ENCODE measurements at regions of chr9 and their contacts with region 1.

Region 1: GRCh38 chr9:137672907-137673791 is 54.3 kb downstream of the EHMT1 start:
- H3K4me3 ChIP-seq: no peak overlapping the region
- H3K27ac ChIP-seq: no peak overlapping the region
- H3K4me1 ChIP-seq: peaks cover 12% of the 10 kb centered on the region; the same call in 1 of the 2 replicates
- CTCF ChIP-seq: peak; percentile 61; the same call in 1 of the 2 replicates

Region 2: GRCh38 chr9:137578518-137579258 is 94.5 kb before region 1 on chr9 and contains the start of gene DPH7:
- CTCF ChIA-PET with region 1: interaction called, 12 read pairs
- POLR2A ChIA-PET with region 1: no interaction called
- H3K4me3 ChIP-seq: peak within 1 kb of the TSS; percentile 95
- H3K27ac ChIP-seq: peak within 1 kb of the TSS; percentile 84
- H3K4me1 ChIP-seq: no peaks in the 10 kb centered on the region; the same call in 1 of the 2 replicates
- CTCF ChIP-seq: peak; percentile 97

Region 3: DNA sequence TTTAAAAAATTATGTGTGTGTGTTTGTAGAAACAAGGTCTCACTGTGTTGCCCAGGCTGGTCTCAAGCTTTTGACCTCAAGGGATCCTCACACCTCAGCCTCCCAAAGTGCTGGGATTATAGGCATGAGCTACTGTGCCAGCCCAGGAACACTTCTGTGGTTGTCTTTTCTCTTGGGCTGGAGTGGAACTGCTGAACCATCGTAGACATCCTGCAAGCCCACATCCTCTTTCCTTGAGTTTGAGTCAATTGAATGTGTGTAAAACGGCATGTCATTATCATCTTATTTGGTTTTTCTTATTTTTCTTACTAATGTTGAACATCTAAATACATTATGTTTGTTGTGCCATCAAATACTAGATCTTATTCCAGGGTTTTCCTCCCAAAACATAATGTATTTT is 14.4 kb before region 1 on chr9:
- CTCF ChIA-PET with region 1: interaction called, 13 read pairs
- POLR2A ChIA-PET with region 1: interaction called, 3 read pairs
- H3K4me3 ChIP-seq: no peak overlapping the region
- H3K27ac ChIP-seq: no peak overlapping the region
- H3K4me1 ChIP-seq: no peaks in the 10 kb centered on the region
- CTCF ChIP-seq: no peak

Region 4: GRCh38 chr9:137689745-137690529 is 16.8 kb after region 1 on chr9:
- CTCF ChIA-PET with region 1: interaction called, 25 read pairs
- POLR2A ChIA-PET with region 1: no interaction called
- H3K4me3 ChIP-seq: no peak overlapping the region
- H3K27ac ChIP-seq: no peak overlapping the region
- H3K4me1 ChIP-seq: no peaks in the 10 kb centered on the region
- CTCF ChIP-seq: no peak

Region 5: DNA sequence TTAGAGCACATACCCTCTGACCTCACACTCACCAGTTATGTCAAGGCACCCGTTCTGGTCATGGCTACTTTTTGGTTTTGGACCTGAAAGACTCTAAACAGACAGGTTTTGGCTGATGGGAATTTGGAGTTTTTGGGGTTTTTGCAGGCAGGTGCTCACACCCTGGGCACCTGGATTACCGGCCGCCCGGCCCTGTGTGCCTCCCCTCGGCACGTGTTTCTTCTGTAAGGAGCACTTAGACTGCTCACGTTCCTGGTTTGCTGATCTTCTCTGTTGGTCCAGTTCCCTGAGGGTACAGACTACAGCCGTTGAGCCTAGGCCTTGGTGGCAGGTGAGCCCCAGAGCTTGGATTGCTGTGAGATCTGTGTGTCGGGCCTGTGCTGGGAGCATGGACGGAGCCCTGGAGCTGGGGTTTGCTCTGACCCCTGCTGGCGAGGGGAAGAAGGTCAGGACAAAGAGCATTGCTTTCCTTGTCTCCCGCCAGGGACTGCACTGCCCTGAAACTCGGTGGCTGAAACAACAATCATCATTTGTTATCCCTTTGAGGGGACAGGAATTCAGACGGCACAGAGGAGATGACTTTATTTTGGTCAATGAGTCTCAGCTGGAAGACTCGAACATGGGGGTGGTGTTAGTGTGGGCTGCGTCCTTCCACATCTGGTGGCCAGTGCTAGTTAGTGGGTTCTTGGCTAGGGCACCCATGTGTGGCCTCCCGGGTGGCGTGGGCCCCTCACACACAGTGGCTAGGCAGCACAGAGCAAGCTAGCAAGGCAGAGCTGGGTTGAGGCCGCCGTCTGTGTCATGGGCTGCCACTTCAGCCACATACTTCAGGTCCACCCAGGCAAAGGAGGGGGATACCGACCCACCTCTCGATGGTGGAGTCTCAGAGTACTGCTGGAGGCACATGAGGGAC is 22.1 kb after region 1 on chr9:
- CTCF ChIA-PET with region 1: interaction called, 23 read pairs
- POLR2A ChIA-PET with region 1: no interaction called
- H3K4me3 ChIP-seq: no peak overlapping the region
- H3K27ac ChIP-seq: no peak overlapping the region
- H3K4me1 ChIP-seq: no peaks in the 10 kb centered on the region
- CTCF ChIP-seq: peak; percentile 50; the same call in 1 of the 2 replicates

Region 6: GRCh38 chr9:137772281-137772873 is 99.2 kb after region 1 on chr9:
- CTCF ChIA-PET with region 1: interaction called, 26 read pairs
- POLR2A ChIA-PET with region 1: no interaction called
- H3K4me3 ChIP-seq: no peak overlapping the region
- H3K27ac ChIP-seq: no peak overlapping the region
- H3K4me1 ChIP-seq: no peaks in the 10 kb centered on the region
- CTCF ChIP-seq: no peak

Measured in HEK293 (cell line).